WTC11 (cell line): ENCODE measurements at regions of chr1 and their contacts with region 1.

Region 1: DNA sequence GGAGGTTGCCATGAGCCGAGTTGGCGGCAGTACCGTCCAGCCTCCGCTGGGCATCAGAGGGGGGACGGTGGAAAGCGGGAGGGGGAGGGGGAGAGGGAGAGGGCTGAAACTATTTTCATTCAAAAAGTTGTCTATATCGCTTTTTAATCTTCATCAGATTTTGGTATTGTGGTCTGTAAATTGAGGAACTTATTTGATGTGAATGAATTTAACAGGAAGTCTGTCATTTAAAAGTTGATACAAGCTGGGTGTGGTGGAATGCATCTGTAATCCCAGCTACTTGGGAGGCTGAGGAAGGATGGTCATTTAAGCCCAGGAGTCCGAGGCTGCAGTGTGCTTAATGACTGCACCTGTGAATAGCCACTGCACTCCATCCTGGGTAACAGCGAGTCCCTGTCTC is 3.0 kb upstream of the EPHX4 start:
- DNase-seq: no peak
- ATAC-seq: no peak
- H3K4me3 Mint-ChIP-seq: no peak overlapping the region
- H3K27ac Mint-ChIP-seq: no peak overlapping the region
- H3K4me1 Mint-ChIP-seq: peaks cover 11% of the 10 kb centered on the region
- H3K27me3 Mint-ChIP-seq: peaks cover 27% of the 10 kb centered on the region
- CTCF ChIP-seq: no peak

Region 2: GRCh38 chr1:91006113-91006908 is 1020.5 kb before region 1 on chr1:
- CTCF ChIA-PET with region 1: no interaction called
- POLR2A ChIA-PET with region 1: interaction called, 10 read pairs
- DNase-seq: no peak
- ATAC-seq: no peak
- H3K4me3 Mint-ChIP-seq: no peak overlapping the region
- H3K27ac Mint-ChIP-seq: peak overlapping the region; percentile 9; the same call in 1 of the 2 replicates
- H3K4me1 Mint-ChIP-seq: peaks cover 45% of the 10 kb centered on the region
- H3K27me3 Mint-ChIP-seq: no peaks in the 10 kb centered on the region
- CTCF ChIP-seq: no peak